IMR-90 (cell line): ENCODE measurements at regions of chr3 and their contacts with region 1.

Region 1: DNA sequence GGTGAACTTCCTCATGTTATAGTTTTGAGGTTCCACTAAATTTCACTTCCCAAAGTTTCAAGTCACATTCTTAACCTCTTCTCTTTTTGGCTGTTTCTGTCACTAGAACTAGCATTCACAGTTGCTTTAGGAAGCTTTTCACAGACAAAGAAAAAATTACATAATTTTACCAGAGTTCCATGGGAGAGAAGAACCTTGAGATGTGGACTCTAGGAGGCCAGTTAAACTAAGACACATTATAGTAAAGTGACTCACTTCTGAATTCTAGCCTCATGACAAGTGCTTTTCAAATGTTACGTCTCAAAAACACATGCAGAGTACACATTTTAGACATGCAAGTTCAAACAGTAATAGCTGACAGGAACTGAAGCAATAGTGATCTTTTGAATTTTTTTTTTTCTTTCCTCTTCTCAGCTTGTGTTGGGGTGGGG is 39.9 kb upstream of the LRTM1 start:
- DNase-seq: peak; percentile 90
- ATAC-seq: peak; percentile 22; the same call in 1 of the 2 replicates
- H3K4me3 ChIP-seq: no peak overlapping the region
- H3K27ac ChIP-seq: 0 out of 2 replicates have a peak overlapping the region, but pooled peaks have one; percentile 20
- H3K4me1 ChIP-seq: peaks cover 33% of the 10 kb centered on the region
- H3K27me3 ChIP-seq: no peaks in the 10 kb centered on the region
- CTCF ChIP-seq: no peak
- POLR2A ChIP-seq: no peak
- RAD21 ChIP-seq: no peak

Region 2: DNA sequence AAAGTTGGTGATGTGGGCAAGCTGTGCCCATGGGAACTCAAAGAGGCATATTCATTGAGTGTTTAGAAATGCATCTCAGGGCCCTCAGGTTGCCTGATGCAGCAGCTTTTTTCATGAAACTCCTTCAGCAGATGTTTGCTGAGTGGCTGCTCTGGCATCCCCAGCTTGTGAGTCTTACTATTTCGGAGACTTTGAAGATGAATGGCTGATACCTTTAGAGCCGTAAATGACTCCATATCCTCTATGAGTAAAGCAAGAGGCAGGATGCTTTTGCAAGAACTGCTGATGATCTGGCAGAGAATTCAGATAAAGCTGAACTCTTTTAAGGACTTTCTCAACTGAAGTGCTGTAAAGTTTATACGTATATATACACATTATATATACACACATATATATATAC is 461.1 kb before region 1 on chr3:
- CTCF ChIA-PET with region 1: no interaction called
- POLR2A ChIA-PET with region 1: no interaction called
- dilution Hi-C with region 1: no loop called
- in situ Hi-C with region 1: no loop called
- intact Hi-C with region 1: no loop called
- DNase-seq: no peak
- ATAC-seq: no peak
- H3K4me3 ChIP-seq: no peak overlapping the region
- H3K27ac ChIP-seq: no peak overlapping the region
- H3K4me1 ChIP-seq: no peaks in the 10 kb centered on the region
- H3K27me3 ChIP-seq: no peaks in the 10 kb centered on the region
- CTCF ChIP-seq: no peak
- POLR2A ChIP-seq: no peak
- RAD21 ChIP-seq: no peak

Region 3: DNA sequence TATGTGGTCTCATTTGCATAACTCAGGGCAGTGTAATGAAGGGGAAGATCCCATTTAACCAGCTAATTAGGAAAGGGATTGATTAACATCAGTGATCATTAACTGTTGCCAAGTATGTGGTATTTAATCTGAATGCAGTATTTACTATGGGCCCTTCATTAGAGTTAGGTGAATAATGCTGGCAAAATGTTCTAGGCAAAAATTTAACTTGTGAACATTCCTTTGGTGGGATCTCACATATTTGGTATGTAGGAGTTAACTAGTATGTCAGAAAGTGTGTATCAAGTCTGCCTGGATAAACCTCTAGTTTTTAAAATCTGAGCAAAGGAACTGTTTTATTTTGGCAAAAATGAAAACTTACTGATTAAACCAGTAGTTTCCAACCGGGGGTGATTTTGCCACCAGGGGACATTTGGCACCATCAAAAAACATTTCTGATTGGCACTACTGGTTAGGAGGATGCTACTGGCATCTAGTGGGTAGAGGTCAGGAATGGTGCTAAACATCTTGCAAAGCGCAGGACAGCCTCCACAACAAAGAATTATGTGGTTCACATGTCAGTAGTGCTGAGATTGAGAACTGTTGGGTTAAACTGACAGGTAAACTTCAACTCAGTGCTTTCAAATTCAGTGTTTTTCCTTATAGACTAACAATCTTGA is 62.4 kb before region 1 on chr3:
- CTCF ChIA-PET with region 1: no interaction called
- POLR2A ChIA-PET with region 1: no interaction called
- dilution Hi-C with region 1: no loop called
- in situ Hi-C with region 1: no loop called
- intact Hi-C with region 1: loop called (anchors 2 kb)
- DNase-seq: peak; percentile 55
- ATAC-seq: peak; percentile 73
- H3K4me3 ChIP-seq: no peak overlapping the region
- H3K27ac ChIP-seq: peak overlapping the region; percentile 90
- H3K4me1 ChIP-seq: peaks cover 27% of the 10 kb centered on the region
- H3K27me3 ChIP-seq: no peaks in the 10 kb centered on the region
- CTCF ChIP-seq: no peak
- POLR2A ChIP-seq: no peak
- RAD21 ChIP-seq: no peak